ENCODE measurements at regions of chr12 and their contacts with region 1.

Region 1: GRCh38 chr12:111451649-111452129 is 46.0 kb downstream of the SH2B3 start:
- DNase-seq: peak in 3 of 14 experiments; percentile 77 to 81 (median 81)
- ATAC-seq: peak; percentile 78
- H3K4me3 ChIP-seq: no peak overlapping the region
- H3K4me3 Mint-ChIP-seq: no peak overlapping the region
- H3K27ac ChIP-seq: no peak overlapping the region
- H3K27ac Mint-ChIP-seq: peak overlapping the region; percentile 14
- H3K4me1 ChIP-seq: peaks cover 25% of the 10 kb centered on the region
- H3K4me1 Mint-ChIP-seq: peaks cover 18% of the 10 kb centered on the region
- H3K27me3 ChIP-seq: no peaks in the 10 kb centered on the region
- H3K27me3 Mint-ChIP-seq: no peaks in the 10 kb centered on the region
- CTCF ChIP-seq: peak; percentile 80

Region 2: GRCh38 chr12:111412007-111412829 is 39.5 kb before region 1 on chr12:
- CTCF ChIA-PET with region 1: interaction called, 487 read pairs
- POLR2A ChIA-PET with region 1: interaction called, 53 read pairs
- intact Hi-C with region 1: no loop called
- DNase-seq: peak in 3 of 14 experiments; percentile 29 to 48 (median 38)
- ATAC-seq: peak; percentile 51
- H3K4me3 ChIP-seq: no peak overlapping the region
- H3K4me3 Mint-ChIP-seq: peak overlapping the region; percentile 83
- H3K27ac ChIP-seq: peak overlapping the region; percentile 39 to 67
- H3K27ac Mint-ChIP-seq: peak overlapping the region; percentile 82
- H3K4me1 ChIP-seq: peaks cover 82% of the 10 kb centered on the region
- H3K4me1 Mint-ChIP-seq: peaks cover 77% of the 10 kb centered on the region
- H3K27me3 ChIP-seq: no peaks in the 10 kb centered on the region
- H3K27me3 Mint-ChIP-seq: no peaks in the 10 kb centered on the region
- CTCF ChIP-seq: no peak

Region 3: GRCh38 chr12:111424793-111425251 is 26.9 kb before region 1 on chr12:
- CTCF ChIA-PET with region 1: interaction called, 21 read pairs
- POLR2A ChIA-PET with region 1: interaction called, 29 read pairs
- intact Hi-C with region 1: no loop called
- DNase-seq: peak in 2 of 14 experiments; percentile 53 to 63
- ATAC-seq: peak; percentile 45
- H3K4me3 ChIP-seq: no peak overlapping the region
- H3K4me3 Mint-ChIP-seq: no peak overlapping the region
- H3K27ac ChIP-seq: peak overlapping the region; percentile 14 to 63
- H3K27ac Mint-ChIP-seq: peak overlapping the region; percentile 100
- H3K4me1 ChIP-seq: peaks cover 65% of the 10 kb centered on the region
- H3K4me1 Mint-ChIP-seq: peaks cover 63% of the 10 kb centered on the region
- H3K27me3 ChIP-seq: no peaks in the 10 kb centered on the region
- H3K27me3 Mint-ChIP-seq: no peaks in the 10 kb centered on the region
- CTCF ChIP-seq: no peak

Region 4: DNA sequence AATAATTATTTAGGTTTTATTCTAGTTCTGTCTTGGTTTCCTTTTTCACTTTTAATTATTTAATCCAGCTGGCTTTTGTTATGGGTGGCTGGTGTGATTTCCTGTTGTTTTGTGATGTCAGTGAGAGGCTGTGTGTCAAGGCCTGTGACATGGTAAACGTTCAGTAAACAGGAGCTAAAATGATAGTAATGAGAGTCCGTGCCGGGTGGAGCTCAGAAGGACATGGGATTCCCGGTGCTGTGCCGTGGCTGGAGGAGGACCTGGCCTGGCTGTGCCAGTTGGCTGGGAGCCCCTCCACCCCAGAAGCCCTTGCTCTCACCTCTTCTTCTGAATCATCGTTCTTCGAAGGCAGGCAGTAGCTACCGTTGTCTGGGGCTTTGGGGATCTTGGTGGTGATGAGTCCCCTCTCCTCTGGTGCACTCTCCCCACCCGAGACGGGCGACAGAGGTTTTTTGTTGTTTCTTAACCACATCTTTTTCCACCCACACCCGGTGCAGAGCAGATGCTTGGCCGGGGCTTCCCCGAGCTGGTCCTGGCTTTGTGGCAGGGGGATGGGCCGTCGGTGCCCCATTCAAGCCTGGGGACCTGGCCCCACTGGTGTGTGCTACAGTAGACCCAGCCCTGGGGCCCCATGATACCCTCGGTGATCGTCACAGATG is 16.9 kb before region 1 on chr12:
- CTCF ChIA-PET with region 1: interaction called, 36 read pairs
- POLR2A ChIA-PET with region 1: interaction called, 87 read pairs
- intact Hi-C with region 1: loop called in 1 of 2 experiments (anchors 2 kb)
- DNase-seq: peak; percentile 68 to 96 (median 82)
- ATAC-seq: peak; percentile 73
- H3K4me3 ChIP-seq: peak overlapping the region; percentile 43
- H3K4me3 Mint-ChIP-seq: peak overlapping the region; percentile 90
- H3K27ac ChIP-seq: peak overlapping the region; percentile 93 to 97
- H3K27ac Mint-ChIP-seq: peak overlapping the region; percentile 100
- H3K4me1 ChIP-seq: peaks cover 97% of the 10 kb centered on the region
- H3K4me1 Mint-ChIP-seq: peaks cover 93% of the 10 kb centered on the region
- H3K27me3 ChIP-seq: no peaks in the 10 kb centered on the region
- H3K27me3 Mint-ChIP-seq: no peaks in the 10 kb centered on the region
- CTCF ChIP-seq: no peak

Region 5: GRCh38 chr12:111529424-111530368 is 78.0 kb after region 1 on chr12:
- CTCF ChIA-PET with region 1: interaction called, 4 read pairs
- POLR2A ChIA-PET with region 1: no interaction called
- intact Hi-C with region 1: loop called in 1 of 2 experiments (anchors 1 kb)
- DNase-seq: peak; percentile 32 to 82 (median 46)
- ATAC-seq: peak; percentile 61
- H3K4me3 ChIP-seq: no peak overlapping the region
- H3K4me3 Mint-ChIP-seq: no peak overlapping the region
- H3K27ac ChIP-seq: no peak overlapping the region
- H3K27ac Mint-ChIP-seq: no peak overlapping the region
- H3K4me1 ChIP-seq: no peaks in the 10 kb centered on the region
- H3K4me1 Mint-ChIP-seq: no peaks in the 10 kb centered on the region
- H3K27me3 ChIP-seq: no peaks in the 10 kb centered on the region
- H3K27me3 Mint-ChIP-seq: no peaks in the 10 kb centered on the region
- CTCF ChIP-seq: peak; percentile 89

Measured in CD4-positive, alpha-beta T cell (primary cell).